Ascending aorta (tissue), 2 donors: ENCODE measurements at regions of chr1 and their contacts with region 1.

Region 1: DNA sequence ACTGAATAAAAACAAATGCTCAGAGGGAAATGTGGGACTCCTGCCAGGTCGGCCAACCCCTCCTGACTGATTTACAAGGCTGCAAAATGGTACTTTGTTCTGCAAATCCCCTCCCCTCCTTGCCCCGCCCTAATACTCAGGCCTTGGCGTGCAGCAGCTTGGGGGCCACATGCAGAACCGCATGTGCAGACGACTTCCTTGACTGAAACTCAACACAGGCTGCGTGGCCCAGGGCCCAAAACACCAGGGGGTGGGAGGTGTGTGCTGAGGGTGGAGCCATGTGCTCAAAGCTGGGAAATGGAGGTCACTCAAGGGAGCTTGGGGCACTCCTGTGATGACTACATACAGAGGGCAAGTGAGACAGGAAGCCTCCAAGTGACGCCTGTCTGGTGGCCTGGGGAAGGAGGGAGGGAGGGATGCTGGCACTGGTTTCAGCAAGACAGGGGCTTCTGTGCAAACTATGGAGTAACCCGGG is 87.2 kb downstream of the MRPL37 start:
- DNase-seq: peak; percentile 86 to 95
- H3K4me3 ChIP-seq: no peak overlapping the region
- H3K27ac ChIP-seq: peak overlapping the region; percentile 85 to 95
- H3K4me1 ChIP-seq: peaks cover 28 to 74% of the 10 kb centered on the region in 2 donors
- H3K27me3 ChIP-seq: no peaks in the 10 kb centered on the region
- CTCF ChIP-seq: no peak

Region 2: DNA sequence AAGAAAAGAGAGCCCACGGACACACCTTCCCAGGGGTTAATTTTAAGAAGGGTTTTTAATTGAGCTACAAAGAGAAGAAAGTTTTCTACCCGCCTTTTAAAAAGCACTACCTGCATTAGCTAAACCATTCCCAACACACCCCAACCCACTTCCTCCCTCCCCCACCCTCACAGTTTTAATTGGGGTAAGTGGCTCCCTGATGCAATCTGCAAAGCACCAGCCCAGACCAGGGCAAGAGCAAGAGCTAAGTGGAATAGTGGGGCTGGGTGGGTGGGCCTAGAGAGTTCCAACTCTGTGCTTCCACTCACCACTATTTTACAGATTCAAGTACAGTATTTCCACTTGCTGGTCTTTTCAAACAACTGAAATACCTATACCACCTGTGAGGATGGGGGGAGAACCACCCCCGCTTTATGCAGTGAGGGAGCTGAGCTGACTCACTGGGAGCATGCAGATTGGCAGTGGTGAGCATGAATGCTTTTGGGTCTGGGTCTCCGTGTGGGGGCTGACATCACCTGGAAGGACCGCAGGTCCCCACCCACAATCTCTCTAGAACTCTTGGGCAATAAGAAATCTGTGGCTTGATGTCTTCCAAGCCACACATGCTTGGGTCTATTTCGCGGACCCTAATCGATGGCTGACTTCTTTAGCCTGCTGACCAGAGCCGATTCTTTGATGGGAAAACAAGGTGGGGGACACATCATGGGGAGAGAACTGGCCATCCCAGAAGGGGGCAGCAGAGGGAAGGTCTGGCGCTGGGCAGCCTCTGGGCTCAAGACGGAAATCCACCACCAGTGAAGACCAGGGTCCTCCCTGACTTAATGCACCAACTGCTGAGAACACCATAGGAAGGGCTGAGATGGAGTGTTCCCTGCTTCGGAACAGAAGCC is 23.5 kb after region 1 on chr1:
- intact Hi-C with region 1: loop called (anchors 2 kb)
- DNase-seq: no peak
- H3K4me3 ChIP-seq: no peak overlapping the region
- H3K27ac ChIP-seq: peak overlapping the region; percentile 43 to 60
- H3K4me1 ChIP-seq: peaks cover 3 to 34% of the 10 kb centered on the region in 2 donors
- H3K27me3 ChIP-seq: no peaks in the 10 kb centered on the region
- CTCF ChIP-seq: peak in 2 of 3 experiments; percentile 13 to 28

Region 3: GRCh38 chr1:54335755-54336108 is 48.5 kb after region 1 on chr1:
- intact Hi-C with region 1: loop called (anchors 5 kb)
- DNase-seq: peak in 1 of 2 donors; percentile 87
- H3K4me3 ChIP-seq: peak overlapping the region in 1 of 2 donors; percentile 56
- H3K27ac ChIP-seq: peak overlapping the region; percentile 89 to 91
- H3K4me1 ChIP-seq: peaks cover 15 to 48% of the 10 kb centered on the region in 2 donors
- H3K27me3 ChIP-seq: no peaks in the 10 kb centered on the region
- CTCF ChIP-seq: no peak